T-cell (primary cell): ENCODE measurements at regions of chr12 and their contacts with region 1.

Region 1: GRCh38 chr12:64687816-64688215 is 71.4 kb downstream of the GNS start:
- DNase-seq: peak in 1 of 35 experiments; percentile 28
- ATAC-seq: peak in 1 of 4 experiments; percentile 11
- H3K4me3 ChIP-seq: no peak overlapping the region
- H3K4me3 Mint-ChIP-seq: peak overlapping the region; percentile 29 to 73 (median 51)
- H3K27ac ChIP-seq: peak overlapping the region; percentile 68
- H3K27ac Mint-ChIP-seq: peak overlapping the region; percentile 88 to 94
- H3K4me1 ChIP-seq: peaks cover 57 to 93% of the 10 kb centered on the region in 2 experiments
- H3K4me1 Mint-ChIP-seq: peaks cover 77 to 86% (median 86%) of the 10 kb centered on the region in 3 donors
- H3K27me3 ChIP-seq: no peaks in the 10 kb centered on the region
- H3K27me3 Mint-ChIP-seq: no peaks in the 10 kb centered on the region

Region 2: GRCh38 chr12:64636856-64637255 is 51.0 kb before region 1 on chr12:
- CTCF ChIA-PET with region 1: interaction called in 1 of 2 experiments, 3 read pairs
- POLR2A ChIA-PET with region 1: interaction called, 7 to 10 read pairs
- DNase-seq: no peak
- ATAC-seq: no peak
- H3K4me3 ChIP-seq: no peak overlapping the region
- H3K4me3 Mint-ChIP-seq: peak overlapping the region in 2 of 3 donors; percentile 6 to 35
- H3K27ac ChIP-seq: no peak overlapping the region
- H3K27ac Mint-ChIP-seq: peak overlapping the region; percentile 65 to 77
- H3K4me1 ChIP-seq: peaks cover 11 to 72% of the 10 kb centered on the region in 2 experiments
- H3K4me1 Mint-ChIP-seq: peaks cover 75 to 87% (median 87%) of the 10 kb centered on the region in 3 donors
- H3K27me3 ChIP-seq: no peaks in the 10 kb centered on the region
- H3K27me3 Mint-ChIP-seq: no peaks in the 10 kb centered on the region

Region 3: DNA sequence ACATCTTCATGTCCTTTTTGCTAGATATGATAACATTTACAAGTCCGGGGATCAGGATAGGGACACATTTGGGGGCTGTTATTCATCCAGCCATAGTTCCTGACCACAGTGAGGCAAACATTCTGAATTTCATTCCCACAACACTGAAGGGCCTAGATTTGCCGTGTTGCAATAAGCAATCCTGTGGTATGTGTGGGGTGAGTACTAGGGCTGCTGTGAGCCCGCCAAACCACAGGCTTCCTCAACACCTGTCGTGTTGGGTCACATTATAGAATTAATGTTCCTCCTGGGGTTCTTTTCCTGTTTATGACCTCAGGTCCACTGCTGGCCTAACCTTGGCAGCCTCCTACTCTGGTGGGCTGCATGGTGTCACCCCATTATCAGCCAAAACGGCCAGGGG is 255.9 kb after region 1 on chr12:
- CTCF ChIA-PET with region 1: no interaction called
- POLR2A ChIA-PET with region 1: no interaction called
- DNase-seq: no peak
- ATAC-seq: no peak
- H3K4me3 ChIP-seq: no peak overlapping the region
- H3K4me3 Mint-ChIP-seq: no peak overlapping the region
- H3K27ac ChIP-seq: no peak overlapping the region
- H3K27ac Mint-ChIP-seq: no peak overlapping the region
- H3K4me1 ChIP-seq: no peaks in the 10 kb centered on the region
- H3K4me1 Mint-ChIP-seq: no peaks in the 10 kb centered on the region
- H3K27me3 ChIP-seq: peaks cover 0 to 3% of the 10 kb centered on the region in 2 experiments
- H3K27me3 Mint-ChIP-seq: peaks cover 7 to 22% of the 10 kb centered on the region in 2 donors

Region 4: DNA sequence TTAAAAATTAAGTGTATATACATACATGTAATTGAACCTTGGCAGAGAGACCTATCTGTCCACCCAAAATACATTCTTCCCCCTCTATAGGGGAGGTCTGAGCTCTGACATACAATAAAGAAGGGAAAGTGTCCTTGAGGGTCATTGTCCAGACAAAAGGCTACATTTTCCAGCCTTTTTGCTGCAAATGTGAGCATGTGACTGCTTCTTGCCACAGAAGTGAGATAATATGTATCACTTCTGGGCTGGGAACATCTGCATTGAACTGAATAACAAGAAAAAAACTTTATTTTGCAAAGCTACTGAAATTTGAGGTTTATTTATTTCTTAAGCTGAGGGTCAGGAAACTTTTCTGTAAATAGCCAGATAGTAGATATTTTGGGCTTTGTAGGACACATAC is 267.9 kb after region 1 on chr12:
- CTCF ChIA-PET with region 1: no interaction called
- POLR2A ChIA-PET with region 1: no interaction called
- DNase-seq: no peak
- ATAC-seq: no peak
- H3K4me3 ChIP-seq: no peak overlapping the region
- H3K4me3 Mint-ChIP-seq: no peak overlapping the region
- H3K27ac ChIP-seq: no peak overlapping the region
- H3K27ac Mint-ChIP-seq: no peak overlapping the region
- H3K4me1 ChIP-seq: no peaks in the 10 kb centered on the region
- H3K4me1 Mint-ChIP-seq: no peaks in the 10 kb centered on the region
- H3K27me3 ChIP-seq: no peaks in the 10 kb centered on the region
- H3K27me3 Mint-ChIP-seq: peaks cover 9 to 16% of the 10 kb centered on the region in 2 donors